Dendritic cell treated with granulocyte-macrophage colony-stimulating factor and Interleukin-4, amounts not matched to agents 40 ng/mL and 50 ng/mL, for 4 days (primary cell): ENCODE measurements at regions of chr4 and their contacts with region 1.

Region 1: GRCh38 chr4:175947117-175947722 is 118.4 kb upstream of the WDR17 start:
- H3K4me3 Mint-ChIP-seq: peak overlapping the region; percentile 58
- H3K27ac Mint-ChIP-seq: peak overlapping the region; percentile 61
- H3K4me1 Mint-ChIP-seq: peaks cover 7% of the 10 kb centered on the region
- H3K27me3 Mint-ChIP-seq: no peaks in the 10 kb centered on the region

Region 2: DNA sequence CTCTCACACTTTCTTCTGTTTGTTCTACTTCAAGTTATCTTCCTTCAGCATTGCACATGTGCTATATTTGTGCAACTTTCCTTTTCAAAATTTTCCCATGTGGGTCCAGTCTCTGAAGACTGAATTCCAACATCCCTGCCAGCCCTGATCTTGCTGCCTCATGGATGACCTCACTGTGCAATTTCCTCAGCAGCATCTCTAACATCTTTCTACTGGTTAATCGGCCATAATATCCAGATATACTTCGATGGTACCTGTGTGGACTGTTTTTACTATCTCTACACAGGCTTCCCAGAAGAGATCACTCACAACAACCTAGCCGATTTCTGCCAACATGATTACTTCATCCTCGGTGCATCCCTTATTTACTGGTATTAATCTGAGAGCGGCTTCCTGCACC is 176.7 kb before region 1 on chr4:
- intact Hi-C with region 1: no loop called
- H3K4me3 Mint-ChIP-seq: no peak overlapping the region
- H3K27ac Mint-ChIP-seq: no peak overlapping the region
- H3K4me1 Mint-ChIP-seq: no peaks in the 10 kb centered on the region
- H3K27me3 Mint-ChIP-seq: no peaks in the 10 kb centered on the region

Region 3: DNA sequence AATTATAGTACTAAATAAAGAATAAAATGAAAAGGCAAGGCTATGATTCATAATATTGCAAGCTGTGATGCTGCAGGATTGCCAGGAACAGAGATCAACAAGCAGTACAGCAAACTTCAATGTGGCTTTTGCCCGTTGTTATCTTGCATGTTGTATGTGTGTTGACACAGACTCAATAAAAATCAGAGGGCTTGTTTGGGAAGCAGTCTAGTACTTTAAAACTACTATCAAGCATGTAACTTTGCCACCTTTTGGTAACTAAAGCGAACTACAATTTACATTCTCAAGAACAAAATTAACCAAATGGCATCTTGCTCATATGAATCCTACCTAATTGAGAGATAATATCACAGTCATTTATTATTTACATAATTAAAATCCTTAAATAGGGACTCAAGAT is 55.4 kb before region 1 on chr4:
- intact Hi-C with region 1: no loop called
- H3K4me3 Mint-ChIP-seq: no peak overlapping the region
- H3K27ac Mint-ChIP-seq: no peak overlapping the region
- H3K4me1 Mint-ChIP-seq: no peaks in the 10 kb centered on the region
- H3K27me3 Mint-ChIP-seq: no peaks in the 10 kb centered on the region

Region 4: DNA sequence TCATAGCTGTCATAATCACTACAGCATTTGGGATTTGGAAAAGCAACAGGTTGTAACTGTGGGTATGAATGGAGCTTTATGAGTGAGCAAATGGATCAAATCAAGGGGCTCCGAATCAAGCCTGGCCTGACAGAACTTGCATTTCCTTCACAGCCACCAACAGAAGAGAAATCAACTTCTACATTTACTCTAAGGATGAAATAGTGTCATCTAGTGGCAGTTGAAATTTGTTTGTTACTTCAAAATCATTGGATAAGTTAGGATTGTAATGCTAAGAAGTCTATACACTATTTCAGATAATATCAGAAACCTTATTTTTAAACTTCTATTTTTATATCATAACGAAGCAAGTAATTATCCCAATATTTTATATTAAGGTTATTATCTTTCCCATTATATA is 107.7 kb after region 1 on chr4:
- intact Hi-C with region 1: loop called (anchors 2 kb)
- H3K4me3 Mint-ChIP-seq: no peak overlapping the region
- H3K27ac Mint-ChIP-seq: no peak overlapping the region
- H3K4me1 Mint-ChIP-seq: peaks cover 8% of the 10 kb centered on the region
- H3K27me3 Mint-ChIP-seq: peaks cover 2% of the 10 kb centered on the region

Region 5: GRCh38 chr4:176123710-176124407 is 176.6 kb after region 1 on chr4:
- intact Hi-C with region 1: loop called (anchors 5 kb)
- H3K4me3 Mint-ChIP-seq: no peak overlapping the region
- H3K27ac Mint-ChIP-seq: no peak overlapping the region
- H3K4me1 Mint-ChIP-seq: peaks cover 7% of the 10 kb centered on the region
- H3K27me3 Mint-ChIP-seq: no peaks in the 10 kb centered on the region

Region 6: DNA sequence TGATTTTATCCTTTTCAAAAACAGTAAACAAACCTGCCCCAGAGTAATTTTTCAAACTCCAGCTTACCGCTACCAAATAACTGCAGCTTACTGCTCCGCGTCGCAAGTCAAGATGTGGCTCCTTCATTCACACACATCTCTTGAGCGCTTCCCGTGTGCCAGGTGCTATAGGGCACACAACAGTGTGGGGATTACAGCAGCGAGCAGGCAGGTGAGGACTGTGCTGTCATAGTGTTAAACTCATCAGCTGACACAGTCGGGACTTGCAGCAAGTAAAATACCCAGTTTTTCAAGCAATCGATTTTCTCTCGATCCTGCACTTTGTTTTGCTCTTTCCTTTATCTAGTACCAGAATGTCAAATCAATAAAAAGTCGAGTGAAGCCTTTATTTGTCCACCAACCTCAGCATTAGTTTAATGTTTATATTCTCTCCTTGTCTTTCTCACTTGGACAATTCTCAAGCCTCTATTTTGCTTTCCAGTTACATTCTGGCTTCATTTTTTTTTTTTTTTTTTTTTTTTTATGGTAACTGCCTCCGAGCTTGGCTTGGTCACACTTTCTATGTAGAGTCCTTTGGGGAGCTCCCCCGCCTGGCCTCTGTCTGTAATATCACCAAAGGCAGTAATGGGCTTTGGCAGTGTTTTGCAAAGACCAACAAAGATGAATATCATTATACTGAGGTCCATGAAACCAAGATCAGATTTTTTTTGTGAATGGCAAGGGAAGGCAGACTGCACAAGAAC is 330.1 kb after region 1 on chr4:
- intact Hi-C with region 1: loop called (anchors 2 kb)
- H3K4me3 Mint-ChIP-seq: no peak overlapping the region
- H3K27ac Mint-ChIP-seq: no peak overlapping the region
- H3K4me1 Mint-ChIP-seq: no peaks in the 10 kb centered on the region
- H3K27me3 Mint-ChIP-seq: peaks cover 2% of the 10 kb centered on the region